ENCODE measurements at regions of chr15 and their contacts with region 1.

Region 1: GRCh38 chr15:88467073-88467934 is at the starts of genes MRPL46 and MRPS11:
- DNase-seq: peak; percentile 82
- ATAC-seq: peak; percentile 91
- H3K4me3 Mint-ChIP-seq: peak within 1 kb of the TSS; percentile 96
- H3K27ac Mint-ChIP-seq: peak within 1 kb of the TSS; percentile 99
- H3K4me1 Mint-ChIP-seq: peaks cover 36% of the 10 kb centered on the region
- H3K27me3 Mint-ChIP-seq: no peaks in the 10 kb centered on the region
- CTCF ChIP-seq: no peak
- total RNA-seq, gene MRPL46: 29.6 and 31.2 TPM in 2 replicates
- total RNA-seq, gene MRPS11: 44.7 and 47.0 TPM in 2 replicates

Region 2: GRCh38 chr15:88454867-88455810 is 12.2 kb before region 1 on chr15:
- CTCF ChIA-PET with region 1: interaction called, 4 read pairs
- POLR2A ChIA-PET with region 1: interaction called, 11 read pairs
- intact Hi-C with region 1: no loop called
- DNase-seq: no peak
- ATAC-seq: peak; percentile 83
- H3K4me3 Mint-ChIP-seq: no peak overlapping the region
- H3K27ac Mint-ChIP-seq: no peak overlapping the region
- H3K4me1 Mint-ChIP-seq: peaks cover 2% of the 10 kb centered on the region
- H3K27me3 Mint-ChIP-seq: peaks cover 2% of the 10 kb centered on the region
- CTCF ChIP-seq: no peak

Region 3: GRCh38 chr15:88546248-88547129 is 79.2 kb after region 1 on chr15 and contains the start of gene DET1:
- CTCF ChIA-PET with region 1: interaction called, 3 read pairs
- POLR2A ChIA-PET with region 1: no interaction called
- intact Hi-C with region 1: loop called (anchors 1 kb)
- DNase-seq: peak; percentile 88
- ATAC-seq: peak; percentile 94
- H3K4me3 Mint-ChIP-seq: peak within 1 kb of the TSS; percentile 92
- H3K27ac Mint-ChIP-seq: peak within 1 kb of the TSS; percentile 94
- H3K4me1 Mint-ChIP-seq: peaks cover 14% of the 10 kb centered on the region
- H3K27me3 Mint-ChIP-seq: no peaks in the 10 kb centered on the region
- CTCF ChIP-seq: no peak
- total RNA-seq, gene DET1: 5.7 and 7.1 TPM in 2 replicates

Region 4: DNA sequence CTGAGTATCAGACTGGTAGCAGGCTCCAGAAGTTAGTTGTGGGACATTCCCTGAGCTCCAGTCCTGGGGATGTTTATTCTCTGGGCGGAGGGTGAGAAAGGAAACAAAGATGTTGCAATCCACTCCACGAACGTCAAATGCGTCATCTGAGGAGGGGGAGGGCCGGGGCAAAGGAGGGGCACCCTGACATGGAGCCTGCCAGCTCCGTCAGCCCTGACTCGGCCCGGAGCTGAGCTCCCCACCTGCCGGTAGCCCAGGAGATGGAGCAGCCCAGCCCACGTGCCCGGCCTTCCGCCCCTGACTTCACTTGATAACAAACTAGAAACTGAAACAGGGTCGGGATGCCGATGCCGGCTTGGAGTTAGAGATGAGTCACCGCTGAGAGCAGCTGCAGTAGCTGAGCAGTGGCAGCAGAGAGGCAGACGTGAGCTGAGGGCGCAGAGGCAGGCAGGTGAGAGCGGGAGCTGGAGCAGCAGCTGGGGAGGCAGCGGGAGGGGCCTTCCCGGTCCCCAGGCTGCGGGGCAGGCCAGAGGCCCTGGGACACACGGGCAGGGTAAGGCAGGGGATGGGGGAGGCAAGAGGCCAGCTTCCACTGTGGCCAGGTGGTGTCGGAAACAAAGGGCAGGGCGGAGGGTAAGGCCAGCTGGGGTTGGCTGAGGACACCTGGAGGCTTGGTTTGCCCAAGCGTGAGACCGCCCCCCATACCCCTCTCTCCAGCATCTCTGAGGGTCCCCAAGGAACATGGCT is 171.5 kb after region 1 on chr15 and contains the start of gene ISG20:
- CTCF ChIA-PET with region 1: no interaction called
- POLR2A ChIA-PET with region 1: interaction called, 16 read pairs
- intact Hi-C with region 1: loop called (anchors 1 kb)
- DNase-seq: peak; percentile 82
- ATAC-seq: peak; percentile 70
- H3K4me3 Mint-ChIP-seq: peak within 1 kb of the TSS; percentile 91
- H3K27ac Mint-ChIP-seq: peak within 1 kb of the TSS; percentile 97
- H3K4me1 Mint-ChIP-seq: peaks cover 90% of the 10 kb centered on the region
- H3K27me3 Mint-ChIP-seq: no peaks in the 10 kb centered on the region
- CTCF ChIP-seq: no peak
- total RNA-seq, gene ISG20: 84.6 and 87.1 TPM in 2 replicates

Region 5: DNA sequence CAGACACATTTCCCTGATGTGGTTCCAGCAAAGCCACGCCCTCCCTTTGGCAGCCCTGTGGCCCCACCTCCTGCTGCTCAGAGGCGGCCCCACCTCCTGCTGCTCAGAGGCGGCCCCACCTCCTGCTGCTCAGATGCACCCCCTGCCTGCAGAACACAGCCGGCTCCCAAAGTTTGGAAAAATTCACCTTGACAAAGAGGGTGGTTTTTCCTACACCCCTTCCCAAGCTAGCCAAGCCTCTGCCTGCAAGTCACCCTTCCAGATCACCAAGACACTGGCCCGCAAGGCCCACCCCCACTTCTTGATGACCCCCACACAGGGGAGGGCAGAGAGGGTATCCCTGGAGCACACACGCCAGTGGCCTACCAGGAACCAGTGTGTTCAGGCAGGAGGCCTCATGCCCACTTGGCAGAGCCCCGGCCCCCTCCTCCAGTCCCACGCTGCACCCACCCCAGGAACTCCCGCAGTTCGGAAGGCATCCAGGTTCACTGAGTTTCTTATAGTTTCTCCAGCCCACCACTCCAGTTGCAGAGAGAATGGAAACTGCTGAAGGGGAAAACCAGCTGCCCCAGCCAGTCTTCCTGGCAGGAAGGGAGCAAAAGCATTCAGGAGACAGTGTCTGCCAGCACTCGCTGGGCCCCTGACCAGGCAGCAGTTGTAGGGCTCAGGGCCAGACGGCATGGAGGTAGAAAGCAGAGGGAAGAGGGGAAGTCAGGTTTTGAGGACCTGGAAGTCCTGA is 430.3 kb after region 1 on chr15:
- CTCF ChIA-PET with region 1: no interaction called
- POLR2A ChIA-PET with region 1: interaction called, 10 read pairs
- intact Hi-C with region 1: loop called (anchors 5 kb)
- DNase-seq: no peak
- ATAC-seq: peak; percentile 74
- H3K4me3 Mint-ChIP-seq: no peak overlapping the region
- H3K27ac Mint-ChIP-seq: no peak overlapping the region
- H3K4me1 Mint-ChIP-seq: peaks cover 16% of the 10 kb centered on the region
- H3K27me3 Mint-ChIP-seq: peaks cover 6% of the 10 kb centered on the region
- CTCF ChIP-seq: no peak

Region 6: GRCh38 chr15:89243691-89244471 is 776.6 kb after region 1 on chr15 and contains the start of gene FANCI:
- CTCF ChIA-PET with region 1: no interaction called
- POLR2A ChIA-PET with region 1: no interaction called
- intact Hi-C with region 1: loop called (anchors 2 kb)
- DNase-seq: peak; percentile 94
- ATAC-seq: peak; percentile 97
- H3K4me3 Mint-ChIP-seq: peak within 1 kb of the TSS; percentile 90
- H3K27ac Mint-ChIP-seq: peak within 1 kb of the TSS; percentile 75
- H3K4me1 Mint-ChIP-seq: peaks cover 29% of the 10 kb centered on the region
- H3K27me3 Mint-ChIP-seq: no peaks in the 10 kb centered on the region
- CTCF ChIP-seq: no peak
- total RNA-seq, gene FANCI: 13.8 and 16.6 TPM in 2 replicates